ENCODE measurements at regions of chr6 and their contacts with region 1.

Region 1: DNA sequence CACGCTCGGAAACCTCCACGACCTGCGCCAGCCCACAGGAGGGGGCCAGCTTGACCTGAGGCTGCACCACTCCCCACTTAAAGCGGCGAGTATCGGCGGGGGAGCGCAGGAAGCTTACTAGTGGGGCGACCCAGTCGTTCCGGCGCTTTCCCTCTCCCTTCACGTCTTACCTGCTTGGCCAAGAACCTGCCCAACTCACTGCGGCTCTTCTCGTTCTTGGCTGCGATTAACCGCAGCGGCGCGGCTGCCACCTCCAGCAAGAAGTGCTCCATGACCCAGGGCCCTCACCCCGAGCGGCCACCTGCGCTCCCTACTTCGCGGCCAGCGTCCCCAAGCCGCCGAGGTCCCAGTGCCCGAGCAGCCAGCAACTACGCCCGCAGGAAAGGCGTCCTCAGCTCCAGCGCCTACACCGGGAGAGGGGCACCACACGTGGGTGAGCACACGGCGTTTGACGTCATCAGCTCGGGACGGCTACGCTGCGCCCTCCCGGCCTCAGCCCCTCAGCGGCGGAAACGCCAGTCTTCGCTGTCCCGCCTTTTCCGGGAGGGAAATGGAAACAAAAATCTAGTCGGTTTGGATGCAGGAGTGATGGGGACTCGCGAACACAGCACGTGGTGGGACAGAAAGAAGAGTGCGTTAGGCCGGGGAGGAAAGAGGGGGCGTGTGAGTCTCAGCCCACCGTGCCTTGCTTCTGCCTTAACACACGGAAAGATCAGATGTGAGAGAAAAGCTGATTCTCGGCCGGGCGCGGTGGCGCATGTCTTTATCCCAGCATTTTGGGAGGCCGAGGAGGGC is at the start of gene MDN1:
- DNase-seq: peak; percentile 86 to 97 (median 90)
- ATAC-seq: peak; percentile 91
- H3K4me3 ChIP-seq: peak within 1 kb of the TSS; percentile 94
- H3K27ac ChIP-seq: peak within 1 kb of the TSS; percentile 93
- H3K4me1 ChIP-seq: peaks cover 12 to 14% of the 10 kb centered on the region in 2 experiments; a peak in 4 of 5 replicates
- H3K27me3 ChIP-seq: no peaks in the 10 kb centered on the region
- CTCF ChIP-seq: no peak
- EP300 ChIP-seq: no peak
- POLR2A ChIP-seq: peak; percentile 94
- RAD21 ChIP-seq: no peak
- polyA plus RNA-seq, gene MDN1: 25.6 to 27.8 TPM

Region 2: DNA sequence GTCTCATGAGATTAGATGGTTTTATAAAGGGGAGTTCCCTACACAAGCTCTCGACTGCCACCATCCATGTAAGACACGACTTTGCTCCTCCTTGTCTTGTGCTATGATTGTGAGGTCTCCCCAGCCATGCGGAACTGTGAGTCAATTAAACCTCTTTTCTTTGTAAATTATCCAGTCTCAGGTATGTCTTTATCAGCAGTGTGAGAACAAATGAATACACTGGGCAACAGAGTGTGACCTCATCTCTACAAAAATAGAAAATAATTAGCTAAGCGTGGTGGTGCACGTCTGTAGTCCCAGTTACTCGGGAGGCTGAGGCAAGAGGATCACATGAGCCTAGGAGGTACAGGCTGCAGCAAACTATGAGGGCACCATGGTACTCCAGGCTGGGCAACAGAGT is 51.2 kb before region 1 on chr6:
- CTCF ChIA-PET with region 1: no interaction called
- POLR2A ChIA-PET with region 1: no interaction called
- in situ Hi-C with region 1: no loop called
- intact Hi-C with region 1: no loop called
- DNase-seq: no peak
- ATAC-seq: no peak
- H3K4me3 ChIP-seq: no peak overlapping the region
- H3K27ac ChIP-seq: no peak overlapping the region
- H3K4me1 ChIP-seq: no peaks in the 10 kb centered on the region
- H3K27me3 ChIP-seq: no peaks in the 10 kb centered on the region
- CTCF ChIP-seq: no peak
- EP300 ChIP-seq: no peak
- POLR2A ChIP-seq: no peak
- RAD21 ChIP-seq: no peak

Region 3: DNA sequence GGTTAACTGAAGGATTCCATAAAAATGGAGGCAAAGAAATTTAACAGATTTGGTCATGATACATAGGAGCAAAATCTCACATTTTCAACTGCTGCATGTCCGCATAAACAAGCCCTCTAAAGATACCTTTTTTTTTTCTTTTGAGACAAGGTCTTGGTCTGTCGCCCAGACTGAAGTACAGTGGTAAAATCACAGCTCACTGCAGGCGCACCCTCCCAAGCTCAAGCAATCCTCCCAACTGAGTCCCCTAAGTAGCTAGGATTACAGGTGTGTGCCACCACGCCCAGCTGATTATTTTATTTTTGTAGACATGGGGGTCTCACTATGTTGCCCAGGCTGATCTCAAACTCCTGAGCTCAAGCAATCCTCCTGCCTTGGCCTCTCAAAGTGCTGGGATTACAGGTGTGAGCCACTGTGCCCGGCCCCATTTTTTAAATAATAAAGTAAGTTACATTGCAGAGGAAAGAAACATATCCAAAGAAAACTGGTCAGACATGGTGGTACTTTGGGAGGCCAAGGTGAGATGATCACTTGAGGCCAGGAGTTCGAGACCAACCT is 13.6 kb before region 1 on chr6:
- CTCF ChIA-PET with region 1: no interaction called
- POLR2A ChIA-PET with region 1: interaction called, 20 read pairs
- in situ Hi-C with region 1: no loop called
- intact Hi-C with region 1: no loop called
- DNase-seq: no peak
- ATAC-seq: no peak
- H3K4me3 ChIP-seq: no peak overlapping the region
- H3K27ac ChIP-seq: no peak overlapping the region
- H3K4me1 ChIP-seq: peaks cover 4 to 16% of the 10 kb centered on the region in 2 experiments; a peak in 4 of 5 replicates
- H3K27me3 ChIP-seq: no peaks in the 10 kb centered on the region
- CTCF ChIP-seq: no peak
- EP300 ChIP-seq: no peak
- POLR2A ChIP-seq: no peak
- RAD21 ChIP-seq: no peak

Region 4: GRCh38 chr6:89829591-89830385 is 10.3 kb after region 1 on chr6 and contains the start of gene CASP8AP2:
- CTCF ChIA-PET with region 1: no interaction called
- POLR2A ChIA-PET with region 1: interaction called, 43 read pairs
- in situ Hi-C with region 1: no loop called
- intact Hi-C with region 1: no loop called
- DNase-seq: peak; percentile 96 to 99 (median 98)
- ATAC-seq: peak; percentile 97
- H3K4me3 ChIP-seq: peak within 1 kb of the TSS; percentile 73
- H3K27ac ChIP-seq: peak within 1 kb of the TSS; percentile 86
- H3K4me1 ChIP-seq: peaks cover 0 to 17% of the 10 kb centered on the region in 2 experiments; a peak in 3 of 5 replicates
- H3K27me3 ChIP-seq: no peaks in the 10 kb centered on the region
- CTCF ChIP-seq: no peak
- EP300 ChIP-seq: no peak
- POLR2A ChIP-seq: peak; percentile 90
- RAD21 ChIP-seq: no peak
- polyA plus RNA-seq, gene CASP8AP2: 10.6 to 14.6 TPM

Region 5: GRCh38 chr6:90068264-90068663 is 248.7 kb after region 1 on chr6:
- CTCF ChIA-PET with region 1: no interaction called
- POLR2A ChIA-PET with region 1: no interaction called
- in situ Hi-C with region 1: no loop called
- intact Hi-C with region 1: no loop called
- DNase-seq: peak; percentile 60 to 83 (median 67)
- ATAC-seq: peak; percentile 90
- H3K4me3 ChIP-seq: no peak overlapping the region
- H3K27ac ChIP-seq: no peak overlapping the region
- H3K4me1 ChIP-seq: peaks cover 0 to 15% of the 10 kb centered on the region in 2 experiments; a peak in 3 of 5 replicates
- H3K27me3 ChIP-seq: no peaks in the 10 kb centered on the region
- CTCF ChIP-seq: no peak
- EP300 ChIP-seq: peak; percentile 34; the same call in 1 of the 2 replicates
- POLR2A ChIP-seq: no peak
- RAD21 ChIP-seq: 0 out of 4 replicates have a peak, but pooled peaks of 1 of the 2 experiments have one; percentile 5